Ascending aorta (tissue), 2 donors: ENCODE measurements at regions of chr1 and their contacts with region 1.

Region 1: GRCh38 chr1:52404116-52404986 is at the starts of genes ORC1 and PRPF38A:
- DNase-seq: peak; percentile 85 to 98
- H3K4me3 ChIP-seq: peak within 1 kb of the TSS; percentile 87 to 91
- H3K27ac ChIP-seq: peak within 1 kb of the TSS; percentile 85 to 96
- H3K4me1 ChIP-seq: peaks cover 10 to 15% of the 10 kb centered on the region in 2 donors
- H3K27me3 ChIP-seq: no peaks in the 10 kb centered on the region
- CTCF ChIP-seq: peak; percentile 32 to 59 (median 51)
- total RNA-seq, gene ORC1: not detected
- total RNA-seq, gene PRPF38A: 20.3 TPM

Region 2: DNA sequence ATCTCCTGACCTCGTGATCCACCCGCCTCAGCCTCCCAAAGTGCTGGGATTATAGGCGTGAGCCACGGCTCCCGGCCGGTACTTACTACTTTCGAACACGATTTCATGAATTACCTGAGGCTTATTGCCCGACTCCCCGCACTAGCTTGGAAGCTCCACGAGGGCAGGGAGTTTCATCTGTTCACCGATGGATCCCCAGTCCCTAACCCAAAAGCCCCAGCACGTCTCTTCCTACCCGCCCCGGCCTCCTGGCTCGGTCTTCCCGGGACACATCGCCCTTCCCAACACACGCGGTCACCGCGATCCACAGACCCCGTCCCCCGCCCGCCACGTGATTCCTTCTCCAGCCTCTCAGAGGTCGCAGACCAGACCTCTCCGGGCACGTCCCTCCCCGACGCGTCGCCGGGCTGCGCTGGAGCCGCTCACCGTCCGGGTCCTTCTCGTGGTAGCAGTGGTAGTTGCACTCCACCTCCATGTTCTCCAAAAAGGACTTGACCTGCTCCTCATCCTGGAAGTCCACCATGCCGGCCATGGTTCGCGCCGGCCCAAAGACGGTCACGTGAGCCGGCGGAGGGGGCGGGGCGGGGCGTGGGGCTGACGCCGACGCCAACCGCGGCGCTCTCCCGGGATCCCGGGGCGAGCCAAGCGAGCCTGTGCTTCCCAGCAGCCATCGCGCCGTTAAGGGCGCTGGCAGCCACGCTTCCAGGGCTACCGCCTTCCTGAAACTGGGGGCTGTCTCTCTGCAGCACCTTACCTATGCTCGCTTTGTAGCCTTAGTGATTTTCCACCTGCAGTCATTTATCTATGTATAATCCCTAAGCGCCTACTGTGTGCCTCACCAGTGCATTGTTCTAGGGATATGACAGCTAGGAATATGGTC is 293.7 kb after region 1 on chr1 and contains the start of gene COA7:
- intact Hi-C with region 1: loop called (anchors 10 kb)
- DNase-seq: peak; percentile 27 to 90
- H3K4me3 ChIP-seq: peak within 1 kb of the TSS; percentile 71 to 85
- H3K27ac ChIP-seq: peak within 1 kb of the TSS; percentile 78 to 85
- H3K4me1 ChIP-seq: peaks cover 0 to 3% of the 10 kb centered on the region in 2 donors
- H3K27me3 ChIP-seq: no peaks in the 10 kb centered on the region
- CTCF ChIP-seq: no peak
- total RNA-seq, gene COA7: 7.6 TPM

Region 3: DNA sequence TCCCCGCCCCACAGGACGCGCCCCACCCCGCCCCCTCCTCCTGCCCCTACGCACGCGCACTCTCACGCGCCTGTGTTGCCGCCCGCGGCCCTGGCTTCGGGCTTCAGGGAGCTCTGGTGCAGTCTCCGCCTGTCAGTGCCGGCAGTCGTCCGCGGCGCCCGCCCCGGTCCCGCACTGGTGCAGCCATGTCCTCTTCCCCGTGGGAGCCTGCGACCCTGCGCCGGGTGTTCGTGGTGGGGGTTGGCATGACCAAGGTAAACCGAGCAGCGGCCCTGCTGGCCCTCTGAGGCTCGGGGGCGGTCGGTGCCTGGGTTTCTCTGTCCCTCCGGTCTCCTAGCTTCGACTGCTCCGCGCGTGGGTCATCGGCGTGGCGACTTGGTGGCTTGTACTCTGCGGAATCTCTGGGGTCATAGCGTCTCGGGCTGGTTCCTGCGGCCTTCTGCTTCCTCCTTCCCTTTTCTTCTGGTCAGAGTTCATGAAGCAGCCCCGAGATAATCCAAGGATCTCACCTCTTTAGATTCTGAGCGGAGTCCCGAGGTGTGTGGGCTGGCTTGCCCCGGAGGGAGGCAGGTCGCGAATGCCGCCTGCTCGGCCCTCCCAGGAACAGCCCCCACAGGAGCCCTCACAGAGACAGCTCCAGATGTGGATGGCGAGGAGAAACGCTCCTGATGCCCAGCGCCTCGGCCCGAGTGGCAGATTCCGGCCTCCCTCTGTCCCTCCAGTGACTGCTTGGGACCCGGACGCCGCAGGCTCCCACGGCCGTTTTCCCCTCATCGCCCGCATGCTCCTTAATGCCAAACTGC is 523.1 kb after region 1 on chr1 and contains the start of gene SCP2:
- intact Hi-C with region 1: loop called (anchors 10 kb)
- DNase-seq: peak; percentile 33 to 91
- H3K4me3 ChIP-seq: peak within 1 kb of the TSS; percentile 50 to 73
- H3K27ac ChIP-seq: peak within 1 kb of the TSS; percentile 72 to 75
- H3K4me1 ChIP-seq: peaks cover 0 to 8% of the 10 kb centered on the region in 2 donors
- H3K27me3 ChIP-seq: no peaks in the 10 kb centered on the region
- CTCF ChIP-seq: no peak
- total RNA-seq, gene SCP2: 26.3 TPM